HEK293 (cell line): ENCODE measurements at regions of chr5 and their contacts with region 1.

Region 1: DNA sequence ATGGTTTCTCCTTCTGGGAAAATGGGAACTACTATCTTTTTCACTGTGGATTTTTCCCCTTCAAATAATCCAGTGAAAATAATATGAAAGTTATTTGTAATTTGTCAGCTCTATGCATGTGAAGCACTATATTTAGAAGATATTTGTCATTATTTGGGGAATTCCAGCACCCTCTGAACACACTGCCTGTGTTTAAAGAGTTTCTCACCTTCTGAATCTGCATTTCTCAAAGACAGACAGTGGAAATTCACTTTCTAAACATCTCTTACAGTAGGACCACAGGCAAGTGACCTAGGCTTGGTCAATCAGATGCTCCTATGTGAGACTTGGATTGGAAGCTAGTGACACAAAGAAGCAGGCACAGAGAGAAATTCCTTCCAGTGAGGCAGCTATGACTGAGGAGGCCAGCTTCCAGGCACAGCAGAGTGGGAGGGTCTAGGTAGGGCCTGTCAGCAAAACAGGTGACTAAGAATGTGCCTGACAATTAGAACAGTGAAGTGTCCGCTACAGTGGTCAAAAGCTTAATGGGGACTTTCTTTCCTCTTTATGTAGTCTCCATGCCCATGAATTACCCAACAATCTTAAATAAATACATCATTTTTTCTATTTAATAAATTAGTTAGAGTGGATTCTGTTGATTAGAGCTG is 167.2 kb downstream of the HMHB1 start:
- H3K4me3 ChIP-seq: no peak overlapping the region
- H3K27ac ChIP-seq: no peak overlapping the region
- H3K4me1 ChIP-seq: no peaks in the 10 kb centered on the region
- CTCF ChIP-seq: no peak

Region 2: GRCh38 chr5:143968011-143968878 is 10.9 kb before region 1 on chr5:
- CTCF ChIA-PET with region 1: interaction called, 18 read pairs
- POLR2A ChIA-PET with region 1: no interaction called
- H3K4me3 ChIP-seq: no peak overlapping the region
- H3K27ac ChIP-seq: no peak overlapping the region
- H3K4me1 ChIP-seq: no peaks in the 10 kb centered on the region
- CTCF ChIP-seq: no peak